ENCODE measurements at regions of chr12 and their contacts with region 1.

Region 1: GRCh38 chr12:93569656-93570551 is 2.6 kb upstream of the SOCS2 start:
- DNase-seq: peak; percentile 60
- ATAC-seq: peak; percentile 42
- H3K4me3 Mint-ChIP-seq: peak overlapping the region; percentile 88
- H3K27ac Mint-ChIP-seq: no peak overlapping the region
- H3K4me1 Mint-ChIP-seq: peaks cover 17% of the 10 kb centered on the region
- H3K27me3 Mint-ChIP-seq: peaks cover 26% of the 10 kb centered on the region
- CTCF ChIP-seq: no peak

Region 2: DNA sequence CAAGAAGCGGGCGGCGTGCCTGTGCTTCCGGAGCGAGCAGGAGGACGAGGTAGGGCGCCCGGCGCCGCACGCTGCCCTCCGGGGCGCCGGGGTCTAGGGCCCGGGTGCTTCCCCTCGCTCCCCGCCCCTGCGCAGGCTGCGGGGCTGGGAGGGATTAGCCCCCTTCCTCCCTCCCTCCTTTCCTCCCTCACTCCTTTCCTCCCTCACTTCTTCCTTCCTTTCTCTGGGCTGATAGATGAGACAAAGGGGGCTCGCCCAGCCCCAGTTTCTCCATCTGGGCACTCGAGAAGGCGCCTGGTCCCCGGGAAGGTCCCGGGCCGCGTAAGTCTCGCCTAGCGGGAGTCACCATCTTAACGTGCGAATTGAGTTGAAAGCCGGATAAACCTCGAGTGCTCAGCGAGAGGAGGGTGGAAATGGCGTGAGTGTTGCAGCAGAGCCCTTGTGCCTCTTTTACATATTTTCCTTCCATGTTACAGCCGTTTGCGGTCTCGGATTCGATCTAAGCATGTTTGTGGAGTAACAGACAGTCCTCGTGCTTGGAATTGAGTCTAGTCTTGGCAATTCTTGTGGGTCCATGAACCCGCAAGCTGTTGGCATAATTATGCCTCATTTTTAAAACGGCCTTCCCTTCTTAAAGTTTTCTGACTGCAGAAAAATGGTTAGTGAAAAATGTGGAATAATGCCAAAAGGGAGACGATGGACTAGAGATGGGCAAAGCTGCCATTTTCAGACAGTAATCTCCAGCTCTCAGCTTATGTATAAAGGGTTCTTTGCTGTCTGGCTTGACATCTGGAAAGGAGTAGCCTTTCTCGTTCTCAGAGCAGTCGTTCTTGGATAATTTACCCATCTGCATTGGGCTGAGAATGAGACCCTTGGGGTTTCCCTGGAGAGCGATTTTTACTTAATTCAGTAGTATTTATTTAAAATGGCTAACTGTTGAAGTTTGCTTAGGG is 191.3 kb before region 1 on chr12:
- CTCF ChIA-PET with region 1: no interaction called
- POLR2A ChIA-PET with region 1: no interaction called
- intact Hi-C with region 1: loop called (anchors 2 kb)
- DNase-seq: peak; percentile 57
- ATAC-seq: peak; percentile 40
- H3K4me3 Mint-ChIP-seq: peak overlapping the region; percentile 100
- H3K27ac Mint-ChIP-seq: peak overlapping the region; percentile 100
- H3K4me1 Mint-ChIP-seq: peaks cover 41% of the 10 kb centered on the region
- H3K27me3 Mint-ChIP-seq: no peaks in the 10 kb centered on the region
- CTCF ChIP-seq: no peak

Region 3: DNA sequence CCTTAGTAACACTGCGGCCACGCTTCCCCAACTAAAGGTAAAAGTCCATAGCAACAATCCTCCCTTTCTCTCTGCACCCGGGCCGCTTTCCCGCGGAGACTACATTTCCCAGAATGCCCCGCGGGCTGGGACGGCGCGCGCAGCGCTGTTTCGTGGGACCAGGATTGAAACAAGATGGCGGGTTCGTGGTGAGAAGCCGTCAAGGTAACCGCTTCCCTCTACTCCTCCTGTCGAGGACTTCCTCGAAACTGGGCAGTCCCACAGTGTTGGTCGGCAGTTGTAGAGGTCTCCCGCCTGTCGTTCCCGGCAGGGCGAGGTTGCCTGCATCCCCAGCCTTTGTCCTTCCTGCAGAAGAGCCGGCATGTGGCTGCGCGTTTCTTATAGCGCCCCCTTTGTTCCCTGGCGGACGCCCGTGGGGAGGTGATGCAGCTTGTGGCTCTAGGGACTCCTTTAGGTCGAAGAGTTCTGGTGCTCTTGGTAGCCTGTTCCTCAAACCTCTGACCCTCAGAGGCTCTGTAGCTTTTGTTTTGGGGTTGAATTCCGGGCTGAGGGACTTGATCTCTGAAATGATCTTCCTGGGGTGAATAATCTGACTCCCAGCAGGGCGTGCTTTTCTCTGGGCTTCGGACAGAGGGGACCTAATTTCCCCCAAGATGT is 102.4 kb before region 1 on chr12 and contains the start of gene MRPL42:
- CTCF ChIA-PET with region 1: no interaction called
- POLR2A ChIA-PET with region 1: no interaction called
- intact Hi-C with region 1: loop called (anchors 1 kb)
- DNase-seq: peak; percentile 93
- ATAC-seq: peak; percentile 92
- H3K4me3 Mint-ChIP-seq: peak within 1 kb of the TSS; percentile 95
- H3K27ac Mint-ChIP-seq: peak within 1 kb of the TSS; percentile 94
- H3K4me1 Mint-ChIP-seq: peaks cover 23% of the 10 kb centered on the region
- H3K27me3 Mint-ChIP-seq: no peaks in the 10 kb centered on the region
- CTCF ChIP-seq: no peak
- total RNA-seq, gene MRPL42: 40.9 and 44.6 TPM in 2 replicates

Region 4: GRCh38 chr12:93536766-93537488 is 33.0 kb before region 1 on chr12:
- CTCF ChIA-PET with region 1: no interaction called
- POLR2A ChIA-PET with region 1: no interaction called
- intact Hi-C with region 1: no loop called
- DNase-seq: no peak
- ATAC-seq: peak; percentile 69
- H3K4me3 Mint-ChIP-seq: peak overlapping the region; percentile 16
- H3K27ac Mint-ChIP-seq: no peak overlapping the region
- H3K4me1 Mint-ChIP-seq: peaks cover 19% of the 10 kb centered on the region
- H3K27me3 Mint-ChIP-seq: no peaks in the 10 kb centered on the region
- CTCF ChIP-seq: no peak

Region 5: DNA sequence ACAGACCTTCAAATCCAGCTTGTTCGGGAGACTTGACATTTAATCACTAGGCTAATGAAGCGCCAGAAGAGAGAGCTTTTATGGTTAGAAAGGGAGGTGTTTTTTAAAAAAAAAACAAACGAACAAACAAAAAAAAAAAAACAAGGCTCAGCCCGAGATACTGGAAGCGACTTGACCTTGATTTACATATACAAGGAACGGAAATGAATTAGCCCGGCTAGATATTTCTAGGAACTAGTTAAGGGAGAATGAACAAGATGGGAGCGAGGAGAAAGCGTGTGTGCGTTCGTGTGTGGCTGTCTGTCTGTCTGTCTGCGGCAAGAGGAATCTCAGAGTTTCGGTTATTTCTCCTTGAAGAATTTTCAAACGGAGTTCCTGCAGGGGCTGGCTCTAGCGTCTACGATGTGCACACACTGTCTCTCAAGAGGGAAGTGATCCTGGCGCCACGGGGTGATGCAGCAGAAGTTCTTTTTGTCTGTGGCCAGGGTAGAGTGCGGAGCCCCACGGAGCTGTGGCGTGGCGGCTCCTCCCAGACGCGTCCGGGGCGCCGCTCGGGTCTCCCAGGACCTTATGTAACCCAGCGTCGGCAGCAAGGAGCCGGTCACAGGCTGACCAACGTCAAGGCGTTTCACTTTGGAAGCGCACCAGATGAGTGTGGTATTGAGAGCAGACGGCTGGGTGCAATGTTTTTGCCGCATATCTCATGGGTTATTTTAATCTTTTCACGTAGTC is 21.4 kb after region 1 on chr12:
- CTCF ChIA-PET with region 1: no interaction called
- POLR2A ChIA-PET with region 1: no interaction called
- intact Hi-C with region 1: loop called (anchors 1 kb)
- DNase-seq: peak; percentile 44
- ATAC-seq: peak; percentile 90
- H3K4me3 Mint-ChIP-seq: peak overlapping the region; percentile 85
- H3K27ac Mint-ChIP-seq: peak overlapping the region; percentile 4
- H3K4me1 Mint-ChIP-seq: peaks cover 21% of the 10 kb centered on the region
- H3K27me3 Mint-ChIP-seq: peaks cover 51% of the 10 kb centered on the region
- CTCF ChIP-seq: no peak

Region 6: DNA sequence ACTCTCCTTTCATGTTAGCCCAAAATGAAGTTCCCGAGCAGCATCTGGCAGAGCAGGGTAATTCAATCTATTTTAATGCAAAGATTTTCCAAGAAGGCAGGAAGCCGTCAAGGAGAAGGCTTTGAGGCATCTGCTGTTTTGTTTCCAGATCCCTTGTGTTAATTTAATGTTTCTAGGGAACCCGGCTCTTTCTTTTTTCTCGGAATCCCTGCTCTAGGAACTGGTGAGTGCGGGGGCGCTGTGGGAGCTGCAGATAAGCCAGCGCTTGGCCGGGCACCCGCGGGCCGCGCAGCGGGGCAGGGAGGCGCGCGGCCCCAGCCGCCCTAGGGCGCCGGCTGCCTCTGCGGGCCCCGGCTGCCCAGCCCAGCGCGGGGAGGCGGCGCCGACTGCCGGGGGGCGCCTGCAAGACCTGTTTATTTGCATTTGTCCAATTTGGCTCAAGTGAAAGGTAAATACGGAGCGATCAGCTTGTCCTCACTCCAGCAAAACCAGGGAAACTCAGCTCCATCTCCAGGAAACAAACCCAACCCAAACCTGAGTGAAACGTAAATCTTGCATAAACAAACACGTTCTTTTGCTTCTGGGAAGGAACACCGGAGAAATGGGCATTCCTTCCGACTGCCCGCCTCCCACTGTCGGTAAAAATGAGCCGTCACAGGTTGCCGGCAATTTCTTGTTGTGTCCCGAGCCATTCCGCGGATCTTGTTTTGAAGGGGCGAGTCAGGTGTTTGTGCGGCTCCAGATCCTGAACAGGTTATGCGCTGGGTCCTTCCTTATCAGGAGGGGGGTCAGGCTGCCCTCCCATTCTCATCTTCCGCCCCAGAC is 172.4 kb after region 1 on chr12:
- CTCF ChIA-PET with region 1: interaction called, 15 read pairs
- POLR2A ChIA-PET with region 1: interaction called, 3 read pairs
- intact Hi-C with region 1: loop called (anchors 1 kb)
- DNase-seq: peak; percentile 56
- ATAC-seq: peak; percentile 93
- H3K4me3 Mint-ChIP-seq: peak overlapping the region; percentile 87
- H3K27ac Mint-ChIP-seq: peak overlapping the region; percentile 84
- H3K4me1 Mint-ChIP-seq: peaks cover 41% of the 10 kb centered on the region
- H3K27me3 Mint-ChIP-seq: no peaks in the 10 kb centered on the region
- CTCF ChIP-seq: no peak

Region 7: GRCh38 chr12:94262228-94263010 is 692.5 kb after region 1 on chr12:
- CTCF ChIA-PET with region 1: no interaction called
- POLR2A ChIA-PET with region 1: no interaction called
- intact Hi-C with region 1: loop called (anchors 10 kb)
- DNase-seq: peak; percentile 63
- ATAC-seq: peak; percentile 82
- H3K4me3 Mint-ChIP-seq: peak overlapping the region; percentile 97
- H3K27ac Mint-ChIP-seq: peak overlapping the region; percentile 99
- H3K4me1 Mint-ChIP-seq: peaks cover 64% of the 10 kb centered on the region
- H3K27me3 Mint-ChIP-seq: no peaks in the 10 kb centered on the region
- CTCF ChIP-seq: no peak